Gastrocnemius medialis (tissue), 4 donors: ENCODE measurements at regions of chr7 and their contacts with region 1.

Region 1: DNA sequence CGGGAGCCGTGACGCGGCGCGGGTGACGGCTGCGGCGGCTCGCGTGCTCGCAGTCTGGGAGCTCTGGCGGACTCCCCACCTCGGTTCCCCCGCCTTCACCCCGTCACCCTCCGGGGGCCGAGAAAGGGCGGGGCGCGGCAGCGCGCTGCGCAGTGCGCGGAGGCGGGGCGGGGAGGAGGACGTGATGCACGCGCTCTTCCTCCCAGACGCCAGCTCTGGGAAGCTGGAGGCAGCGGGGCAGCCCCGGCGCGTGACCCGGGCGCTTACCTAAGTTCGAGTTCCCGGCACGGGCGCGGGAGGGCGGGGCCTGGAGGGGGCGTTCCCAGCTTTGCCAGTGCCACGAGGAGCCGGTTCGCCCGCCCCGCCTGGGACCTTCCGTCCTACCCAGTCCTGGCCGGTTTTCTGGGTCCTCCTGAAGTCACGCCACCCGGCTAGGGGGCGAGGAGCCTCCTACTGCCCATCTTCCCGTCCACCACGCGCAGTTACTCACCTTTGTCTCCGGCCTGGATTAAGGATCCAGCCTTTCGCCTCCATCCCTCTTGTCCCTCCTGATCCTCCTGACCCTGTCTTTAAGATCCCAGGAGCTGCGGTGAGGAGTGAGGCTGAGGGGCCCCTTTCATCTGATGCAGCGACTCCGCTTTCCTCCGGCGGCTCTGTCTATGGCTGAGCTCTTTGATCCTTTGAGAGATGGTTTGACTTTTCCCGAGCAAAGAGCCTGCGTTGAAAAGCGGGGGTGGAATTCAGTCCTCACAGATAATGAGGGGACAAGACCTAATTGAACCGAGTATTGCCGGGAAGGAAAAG is 470 bp upstream of the NAMPT start:
- DNase-seq: peak; percentile 97 to 98
- ATAC-seq: peak; percentile 82 to 86
- H3K4me3 ChIP-seq: peak overlapping the region; percentile 73 to 85 (median 78)
- H3K27ac ChIP-seq: peak overlapping the region; percentile 87 to 98 (median 97)
- H3K4me1 ChIP-seq: peaks cover 18 to 24% of the 10 kb centered on the region in 2 donors
- H3K27me3 ChIP-seq: no peaks in the 10 kb centered on the region
- CTCF ChIP-seq: peak in 1 of 5 experiments; percentile 7
- POLR2A ChIP-seq: peak; percentile 61 to 78

Region 2: GRCh38 chr7:105876091-105876963 is 408.9 kb before region 1 on chr7 and contains the start of gene ATXN7L1:
- in situ Hi-C with region 1: no loop called
- intact Hi-C with region 1: loop called (anchors 5 kb)
- DNase-seq: peak; percentile 93 to 94
- ATAC-seq: peak; percentile 98
- H3K4me3 ChIP-seq: peak within 1 kb of the TSS; percentile 70 to 91 (median 81)
- H3K27ac ChIP-seq: peak within 1 kb of the TSS; percentile 80 to 89 (median 84)
- H3K4me1 ChIP-seq: peaks cover 18% of the 10 kb centered on the region in 2 donors
- H3K27me3 ChIP-seq: no peaks in the 10 kb centered on the region
- CTCF ChIP-seq: peak; percentile 51 to 91 (median 82)
- POLR2A ChIP-seq: peak; percentile 44 to 80
- total RNA-seq, gene ATXN7L1: 1.6 to 6.6 (median 4.8) TPM

Region 3: DNA sequence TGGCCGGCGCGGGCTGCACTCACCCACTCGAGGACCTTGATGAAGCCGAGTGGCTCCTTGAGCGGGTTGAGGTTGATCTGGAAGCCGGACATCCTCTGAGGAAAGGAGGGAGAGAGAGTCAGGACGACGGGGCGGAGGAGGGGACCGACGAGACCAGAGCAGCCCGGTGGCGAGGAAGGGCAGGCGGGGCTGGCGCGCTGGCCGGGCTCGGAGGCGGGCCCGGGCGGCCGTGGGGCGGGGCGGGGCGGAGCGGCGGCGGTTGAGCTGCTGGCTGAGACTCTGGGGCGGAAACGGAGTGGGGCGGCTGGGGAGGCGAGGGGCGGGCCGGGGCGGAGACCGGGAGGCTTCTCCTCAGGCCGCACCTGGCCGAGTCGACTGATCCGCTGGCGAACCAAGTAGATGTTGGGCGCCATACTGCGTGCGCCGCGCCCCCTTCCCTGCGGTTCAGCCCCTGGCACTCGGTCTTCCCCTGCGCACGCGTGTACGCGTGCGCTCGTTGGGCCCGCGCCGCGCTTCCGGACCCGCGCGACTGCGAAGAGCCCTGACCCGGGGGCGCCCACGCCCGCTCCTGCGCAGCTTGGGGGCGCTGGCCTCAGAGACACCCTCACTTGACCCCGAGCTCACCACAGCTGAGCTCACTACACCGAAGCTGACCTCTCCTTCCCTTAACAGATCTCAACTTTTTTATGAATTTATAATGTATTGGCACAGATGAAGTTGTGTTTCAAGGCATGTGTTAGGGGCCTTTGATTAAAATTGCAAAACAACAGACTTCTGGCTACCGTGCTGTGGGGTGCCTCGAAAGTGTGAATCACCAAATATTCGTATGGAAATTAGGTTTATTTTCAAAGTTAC is 172.9 kb before region 1 on chr7 and contains the start of gene SYPL1:
- in situ Hi-C with region 1: no loop called
- intact Hi-C with region 1: loop called (anchors 1 kb)
- DNase-seq: peak; percentile 90 to 92
- ATAC-seq: peak; percentile 77 to 80
- H3K4me3 ChIP-seq: peak within 1 kb of the TSS; percentile 71 to 82 (median 72)
- H3K27ac ChIP-seq: peak within 1 kb of the TSS; percentile 94 to 99 (median 98)
- H3K4me1 ChIP-seq: peaks cover 53 to 58% of the 10 kb centered on the region in 2 donors
- H3K27me3 ChIP-seq: no peaks in the 10 kb centered on the region
- CTCF ChIP-seq: peak in 1 of 5 experiments; percentile 31
- POLR2A ChIP-seq: peak; percentile 10 to 76
- total RNA-seq, gene SYPL1: 81.5 to 90.9 (median 83.2) TPM

Region 4: GRCh38 chr7:106260136-106260561 is 25.1 kb before region 1 on chr7:
- in situ Hi-C with region 1: no loop called
- intact Hi-C with region 1: no loop called
- DNase-seq: no peak
- ATAC-seq: no peak
- H3K4me3 ChIP-seq: no peak overlapping the region
- H3K27ac ChIP-seq: no peak overlapping the region
- H3K4me1 ChIP-seq: no peaks in the 10 kb centered on the region
- H3K27me3 ChIP-seq: no peaks in the 10 kb centered on the region
- CTCF ChIP-seq: no peak
- POLR2A ChIP-seq: no peak

Region 5: DNA sequence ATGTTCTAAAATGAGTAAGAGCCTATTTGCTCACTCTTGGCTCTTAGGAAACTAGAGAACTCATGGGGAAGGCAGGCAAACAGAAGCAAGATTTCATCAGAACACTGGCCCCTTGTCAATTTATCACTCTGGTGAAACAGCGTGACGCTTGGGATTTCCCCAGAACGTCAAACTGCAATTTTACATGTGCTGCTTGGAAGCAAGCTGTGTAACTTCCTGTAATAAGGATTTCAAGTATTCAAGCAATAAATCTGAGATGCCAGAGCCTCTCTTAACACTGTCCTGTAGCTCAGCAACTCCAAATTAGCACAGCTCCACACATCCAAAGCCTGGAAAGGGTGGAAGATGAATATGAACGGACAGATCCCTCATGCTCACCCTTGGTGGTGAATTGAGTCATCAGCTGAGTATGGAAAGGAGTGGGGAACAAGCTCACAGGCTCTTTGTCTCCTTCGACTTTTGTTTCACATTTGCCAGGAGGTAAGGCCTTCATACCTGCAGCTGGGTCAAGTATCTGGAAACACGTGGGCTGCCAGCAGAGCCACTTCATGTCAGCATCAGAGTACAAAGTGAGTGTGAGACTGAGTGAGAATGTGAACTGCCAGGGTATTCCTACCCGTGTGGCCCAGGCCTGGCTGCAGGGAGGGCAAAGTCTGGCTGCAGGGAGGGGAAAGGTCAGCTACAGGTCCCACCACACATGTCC is 139.9 kb after region 1 on chr7:
- in situ Hi-C with region 1: no loop called
- intact Hi-C with region 1: loop called (anchors 1 kb)
- DNase-seq: peak; percentile 72 to 80
- ATAC-seq: peak; percentile 93 to 96
- H3K4me3 ChIP-seq: peak overlapping the region in 1 of 4 donors; percentile 1
- H3K27ac ChIP-seq: peak overlapping the region; percentile 65 to 83 (median 77)
- H3K4me1 ChIP-seq: peaks cover 31 to 32% of the 10 kb centered on the region in 2 donors
- H3K27me3 ChIP-seq: no peaks in the 10 kb centered on the region
- CTCF ChIP-seq: no peak
- POLR2A ChIP-seq: no peak

Region 6: GRCh38 chr7:107168233-107169119 is 883.2 kb after region 1 on chr7 and contains the start of gene HBP1:
- in situ Hi-C with region 1: loop called in 1 of 4 experiments (anchors 25 kb)
- intact Hi-C with region 1: loop called (anchors 5 kb)
- DNase-seq: peak; percentile 100
- ATAC-seq: peak; percentile 84
- H3K4me3 ChIP-seq: peak within 1 kb of the TSS; percentile 85 to 94 (median 89)
- H3K27ac ChIP-seq: peak within 1 kb of the TSS; percentile 97 to 100 (median 98)
- H3K4me1 ChIP-seq: peaks cover 32 to 38% of the 10 kb centered on the region in 2 donors
- H3K27me3 ChIP-seq: no peaks in the 10 kb centered on the region
- CTCF ChIP-seq: no peak
- POLR2A ChIP-seq: peak; percentile 40 to 95
- total RNA-seq, gene HBP1: 70.6 to 172 (median 143) TPM

Region 7: GRCh38 chr7:107430057-107430456 is 1144.8 kb after region 1 on chr7:
- in situ Hi-C with region 1: no loop called
- intact Hi-C with region 1: no loop called
- DNase-seq: no peak
- ATAC-seq: no peak
- H3K4me3 ChIP-seq: no peak overlapping the region
- H3K27ac ChIP-seq: no peak overlapping the region
- H3K4me1 ChIP-seq: peaks cover 15 to 23% of the 10 kb centered on the region in 2 donors
- H3K27me3 ChIP-seq: no peaks in the 10 kb centered on the region
- CTCF ChIP-seq: no peak
- POLR2A ChIP-seq: no peak